ENCODE measurements at regions of chr16 and their contacts with region 1.

Region 1: DNA sequence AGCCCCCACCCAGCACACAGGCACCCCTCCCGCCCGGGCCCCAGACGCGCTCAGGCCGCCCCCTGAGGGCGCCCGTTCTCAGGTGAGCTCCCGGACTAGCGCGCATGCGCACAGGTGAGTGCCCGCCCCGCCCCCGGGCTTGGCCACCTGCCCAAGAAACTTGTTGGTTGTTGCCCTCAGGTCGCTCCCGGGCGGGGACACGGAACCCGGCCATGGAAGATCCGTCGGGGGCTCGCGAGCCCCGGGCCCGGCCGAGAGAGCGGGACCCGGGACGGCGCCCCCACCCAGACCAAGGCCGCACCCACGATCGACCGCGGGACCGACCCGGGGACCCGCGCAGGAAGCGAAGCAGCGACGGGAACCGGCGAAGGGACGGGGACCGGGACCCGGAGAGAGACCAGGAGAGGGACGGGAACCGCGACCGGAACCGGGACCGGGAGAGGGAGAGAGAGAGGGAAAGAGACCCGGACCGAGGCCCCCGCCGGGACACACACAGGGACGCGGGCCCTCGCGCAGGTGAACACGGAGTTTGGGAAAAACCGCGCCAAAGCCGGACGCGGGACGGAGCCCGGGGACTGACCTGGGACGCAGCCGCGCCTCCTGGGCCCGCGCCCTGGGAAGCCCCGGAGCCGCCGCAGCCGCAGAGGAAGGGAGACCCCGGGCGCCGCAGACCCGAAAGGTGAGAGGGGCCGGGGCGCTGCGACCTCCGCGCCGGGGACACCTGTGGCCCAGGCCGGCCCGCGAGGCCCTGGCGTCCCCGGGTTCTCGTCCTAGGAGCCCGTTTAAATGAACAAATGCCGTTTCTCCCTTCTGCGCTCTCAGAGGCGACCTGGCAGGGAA is at the start of gene MARVELD3:
- DNase-seq: peak; percentile 85 to 93
- ATAC-seq: peak; percentile 57
- total RNA-seq, gene MARVELD3: 69.7 to 112 TPM

Region 2: DNA sequence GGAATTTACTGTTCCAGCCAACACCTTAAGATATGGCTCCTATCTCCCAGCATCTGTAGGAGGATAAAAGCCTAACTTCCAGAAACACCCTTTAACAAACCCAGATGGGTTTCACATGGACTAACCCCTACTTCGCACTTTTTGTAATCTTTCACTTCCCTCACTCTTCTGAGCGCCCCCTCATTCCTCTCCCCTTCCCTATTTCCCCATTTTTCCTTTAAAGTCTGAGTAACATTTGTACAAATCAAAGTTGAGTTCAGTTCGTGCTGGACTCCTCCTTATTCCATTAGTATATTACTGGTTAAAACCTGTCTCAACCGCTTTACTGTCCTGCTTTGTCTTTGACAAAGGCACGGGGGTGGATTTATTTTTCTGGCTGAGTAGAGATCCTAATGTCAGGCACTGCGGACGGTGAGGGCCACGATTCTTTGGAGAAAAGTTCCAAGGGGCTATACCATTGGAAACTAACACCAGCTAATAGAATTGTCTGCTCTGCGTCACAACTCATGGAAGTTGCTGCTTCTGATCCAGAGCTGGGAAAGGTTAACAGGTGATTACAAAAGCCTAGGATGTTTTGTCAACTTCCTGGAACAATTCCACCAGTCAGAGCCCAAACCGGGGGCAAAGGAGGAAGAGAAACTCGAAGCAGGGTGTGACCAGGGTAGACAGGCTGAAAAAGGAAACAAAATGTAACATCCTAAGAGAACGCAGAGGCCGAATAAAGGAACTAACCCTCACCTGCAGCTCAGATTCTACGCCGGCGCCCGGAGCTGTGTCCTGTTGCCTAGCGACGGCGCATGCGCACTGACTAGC is 61.9 kb before region 1 on chr16:
- intact Hi-C with region 1: loop called in 1 of 2 experiments (anchors 10 kb)
- DNase-seq: no peak
- ATAC-seq: peak; percentile 65

Measured in left colon (tissue), 2 donors.